ENCODE measurements at regions of chr7 and their contacts with region 1.

Region 1: GRCh38 chr7:104231054-104232046 is 23.5 kb upstream of the ORC5 start:
- DNase-seq: peak; percentile 63
- H3K4me3 ChIP-seq: no peak overlapping the region
- H3K27ac ChIP-seq: no peak overlapping the region
- H3K4me1 ChIP-seq: no peaks in the 10 kb centered on the region
- H3K27me3 ChIP-seq: peaks cover 24% of the 10 kb centered on the region
- CTCF ChIP-seq: peak; percentile 85

Region 2: GRCh38 chr7:104341546-104341945 is 110.2 kb after region 1 on chr7:
- CTCF ChIA-PET with region 1: no interaction called
- POLR2A ChIA-PET with region 1: no interaction called
- intact Hi-C with region 1: no loop called
- DNase-seq: peak; percentile 29
- H3K4me3 ChIP-seq: no peak overlapping the region
- H3K27ac ChIP-seq: no peak overlapping the region
- H3K4me1 ChIP-seq: no peaks in the 10 kb centered on the region
- H3K27me3 ChIP-seq: peaks cover 26% of the 10 kb centered on the region
- CTCF ChIP-seq: peak; percentile 38

Region 3: DNA sequence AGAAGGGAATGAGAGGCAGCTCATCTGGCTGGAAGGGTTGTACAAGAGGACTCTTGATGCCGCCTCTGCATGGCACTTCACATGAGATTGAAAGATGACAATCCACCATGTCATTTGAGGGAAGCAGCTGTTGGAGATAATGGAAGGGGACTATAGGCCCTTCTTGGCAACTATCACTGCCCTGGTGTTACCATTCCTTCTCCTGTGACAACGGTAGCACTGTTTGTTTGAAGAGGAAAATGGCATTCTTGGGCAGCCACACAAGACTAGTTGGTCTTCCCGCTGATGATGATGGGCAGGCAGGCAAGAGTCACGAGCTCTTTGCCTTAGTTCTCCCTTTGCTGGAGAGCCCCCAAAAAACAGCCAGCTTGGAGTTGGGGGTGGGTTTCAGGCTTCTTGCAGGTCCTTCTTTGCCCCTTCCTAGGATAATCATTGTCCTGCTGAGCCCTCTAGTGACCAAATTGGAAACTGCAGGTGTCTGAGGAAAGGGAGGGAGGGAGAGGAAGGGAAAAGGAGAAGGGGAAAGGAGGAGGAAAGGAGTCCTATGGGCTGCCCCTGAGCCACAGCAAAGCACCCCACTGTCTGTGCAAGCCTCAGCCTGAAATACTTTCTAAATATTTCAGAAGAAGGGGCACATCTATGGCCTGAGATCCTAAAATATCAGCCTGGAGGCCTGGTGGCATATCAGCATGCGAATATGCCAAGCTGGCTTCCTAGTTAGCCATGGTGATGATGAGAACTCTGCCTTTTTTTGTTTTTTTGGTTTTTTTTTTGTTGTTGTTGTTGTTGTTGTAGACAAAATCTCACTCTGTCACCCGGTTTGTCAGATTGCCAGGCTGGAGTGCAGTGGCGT is 617.0 kb after region 1 on chr7:
- CTCF ChIA-PET with region 1: interaction called, 4 read pairs
- POLR2A ChIA-PET with region 1: no interaction called
- intact Hi-C with region 1: loop called (anchors 5 kb)
- DNase-seq: peak; percentile 73
- H3K4me3 ChIP-seq: no peak overlapping the region
- H3K27ac ChIP-seq: no peak overlapping the region
- H3K4me1 ChIP-seq: no peaks in the 10 kb centered on the region
- H3K27me3 ChIP-seq: peaks cover 41% of the 10 kb centered on the region
- CTCF ChIP-seq: peak; percentile 94

Region 4: DNA sequence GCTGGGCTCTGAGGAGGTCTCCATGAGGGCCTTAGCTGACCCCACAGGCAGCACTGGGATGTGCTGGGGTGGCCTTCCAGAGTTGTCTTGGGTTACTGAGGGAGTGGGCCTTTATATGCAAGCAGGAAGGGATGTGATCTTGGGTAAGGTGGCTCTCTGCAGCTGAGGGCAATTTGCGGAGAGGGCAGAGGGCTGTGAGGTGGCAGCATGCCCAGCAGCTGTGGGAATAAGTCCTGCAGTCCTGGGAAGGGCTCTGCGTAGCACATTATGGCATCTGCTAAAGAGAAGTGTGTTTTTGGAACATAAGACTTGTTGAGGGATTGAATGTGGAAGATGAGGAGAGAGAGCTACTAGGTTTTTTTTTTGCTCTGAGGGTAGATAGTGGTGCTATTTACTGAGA is 683.1 kb after region 1 on chr7:
- CTCF ChIA-PET with region 1: no interaction called
- POLR2A ChIA-PET with region 1: no interaction called
- intact Hi-C with region 1: loop called (anchors 10 kb)
- DNase-seq: no peak
- H3K4me3 ChIP-seq: no peak overlapping the region
- H3K27ac ChIP-seq: no peak overlapping the region
- H3K4me1 ChIP-seq: no peaks in the 10 kb centered on the region
- H3K27me3 ChIP-seq: no peaks in the 10 kb centered on the region
- CTCF ChIP-seq: no peak